A673 (cell line): ENCODE measurements at regions of chr18 and their contacts with region 1.

Region 1: DNA sequence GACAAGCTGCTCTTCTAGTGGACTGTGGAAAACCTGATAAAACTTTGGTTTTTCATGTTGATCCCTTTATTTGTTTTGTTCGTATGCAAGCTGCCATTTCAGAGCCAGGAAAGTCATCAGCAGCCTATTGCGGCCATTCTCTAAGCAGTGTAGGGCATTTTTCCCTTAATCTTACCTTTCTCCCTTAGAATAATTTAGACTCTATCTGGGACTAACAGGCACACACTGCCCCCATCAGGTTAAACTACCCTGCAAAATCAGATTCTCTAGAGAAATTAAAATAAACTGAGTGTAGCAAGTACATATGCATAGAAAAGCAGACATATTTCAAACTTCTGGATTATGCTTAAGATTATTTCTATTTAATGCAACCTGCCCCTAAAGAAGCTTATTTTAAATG is 347.5 kb downstream of the METTL4 start:
- DNase-seq: peak; percentile 32
- H3K4me3 ChIP-seq: no peak overlapping the region
- H3K27ac ChIP-seq: no peak overlapping the region
- H3K4me1 ChIP-seq: no peaks in the 10 kb centered on the region
- H3K27me3 ChIP-seq: peaks cover 31% of the 10 kb centered on the region
- CTCF ChIP-seq: peak; percentile 60

Region 2: GRCh38 chr18:1585879-1586488 is 637.9 kb before region 1 on chr18:
- CTCF ChIA-PET with region 1: no interaction called
- POLR2A ChIA-PET with region 1: no interaction called
- intact Hi-C with region 1: loop called (anchors 10 kb)
- DNase-seq: peak; percentile 60
- H3K4me3 ChIP-seq: no peak overlapping the region
- H3K27ac ChIP-seq: no peak overlapping the region
- H3K4me1 ChIP-seq: no peaks in the 10 kb centered on the region
- H3K27me3 ChIP-seq: peaks cover 8% of the 10 kb centered on the region
- CTCF ChIP-seq: peak; percentile 72

Region 3: DNA sequence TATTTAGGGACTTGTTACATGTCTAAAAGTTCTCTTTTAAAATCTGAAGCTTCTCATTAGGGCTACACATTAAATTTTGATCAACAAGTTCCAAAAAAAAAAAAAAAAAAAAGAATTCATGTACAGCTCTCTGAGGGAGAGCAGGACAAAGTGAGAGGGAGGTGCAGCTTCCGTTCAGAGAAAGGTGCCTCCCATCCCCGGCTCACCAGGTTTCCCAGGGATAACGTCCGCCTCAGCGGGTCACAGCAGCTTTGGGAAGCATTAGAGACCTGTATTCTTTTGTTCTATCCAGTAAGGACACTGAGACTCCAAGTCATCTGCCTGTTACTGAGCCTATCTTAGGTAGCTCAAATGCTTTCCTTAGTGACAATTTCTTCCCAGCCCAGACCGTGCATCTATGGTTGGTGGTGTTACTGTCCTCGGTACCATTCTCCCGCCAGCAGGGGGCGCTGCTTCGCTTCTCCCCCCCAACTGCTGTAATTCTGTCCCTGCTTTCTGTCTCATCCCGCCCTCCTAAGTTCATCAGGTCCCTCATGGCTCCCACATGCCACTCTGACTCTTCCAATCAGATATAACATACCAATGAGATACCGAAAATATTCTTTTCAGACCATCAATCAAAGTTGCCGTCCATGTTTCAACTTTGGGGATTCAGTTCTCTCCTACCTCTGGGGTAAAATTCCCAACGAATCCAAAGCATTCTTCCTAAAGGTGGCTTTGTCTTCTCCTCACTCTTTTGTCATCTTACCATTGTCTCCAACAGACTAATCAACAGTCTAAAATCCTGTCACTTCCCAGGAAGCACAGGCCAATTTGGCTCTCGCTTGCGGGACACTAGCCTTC is 119.0 kb before region 1 on chr18:
- CTCF ChIA-PET with region 1: no interaction called
- POLR2A ChIA-PET with region 1: no interaction called
- intact Hi-C with region 1: loop called (anchors 5 kb)
- DNase-seq: peak; percentile 70
- H3K4me3 ChIP-seq: no peak overlapping the region
- H3K27ac ChIP-seq: no peak overlapping the region
- H3K4me1 ChIP-seq: no peaks in the 10 kb centered on the region
- H3K27me3 ChIP-seq: no peaks in the 10 kb centered on the region
- CTCF ChIP-seq: peak; percentile 89